Activated CD4-positive, alpha-beta T cell treated with anti-CD3 and anti-CD28 coated beads for 36 hours (primary cell): ENCODE measurements at regions of chr17 and their contacts with region 1.

Region 1: DNA sequence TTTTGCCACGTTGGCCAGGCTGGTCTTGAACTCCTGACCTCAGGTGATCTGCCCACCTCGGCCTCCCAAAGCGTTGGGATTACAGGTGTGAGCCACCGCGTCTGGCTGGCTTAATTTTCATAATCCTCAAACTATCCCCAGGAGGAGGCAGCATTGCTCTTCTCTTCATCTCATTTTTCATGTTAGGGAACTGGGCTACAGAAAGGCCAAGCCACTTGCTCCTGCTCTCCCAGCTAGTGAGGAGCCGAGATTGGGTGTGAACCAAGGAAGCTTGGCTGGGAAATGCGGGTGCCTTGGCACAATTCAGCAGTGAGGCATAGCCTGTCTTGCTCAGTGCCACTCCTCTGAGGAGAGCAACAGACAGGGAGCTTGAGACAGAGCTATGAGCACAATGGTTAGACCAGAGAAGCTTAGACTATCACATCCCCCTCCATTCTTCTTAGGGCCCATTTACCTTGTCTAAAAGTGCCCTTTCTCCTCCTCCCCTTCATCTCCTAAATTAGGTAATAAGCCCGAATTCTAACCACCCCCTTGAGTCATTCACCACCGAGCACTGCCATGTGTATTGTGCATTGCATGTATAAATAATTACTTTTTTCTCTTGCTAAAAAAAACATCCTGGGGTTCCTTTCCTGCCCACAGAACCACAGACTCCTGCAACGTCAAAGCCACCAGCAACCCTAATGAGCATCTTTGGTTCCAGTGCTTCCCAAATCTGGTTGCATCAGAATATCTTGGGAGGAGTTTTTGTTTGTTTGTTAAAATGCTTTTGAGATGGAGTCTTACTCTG is 20.0 kb upstream of the KIF19 start:
- DNase-seq: no peak
- ATAC-seq: peak; percentile 49
- H3K4me3 Mint-ChIP-seq: no peak overlapping the region
- H3K27ac Mint-ChIP-seq: no peak overlapping the region
- H3K4me1 Mint-ChIP-seq: peaks cover 7% of the 10 kb centered on the region
- H3K27me3 Mint-ChIP-seq: no peaks in the 10 kb centered on the region

Region 2: DNA sequence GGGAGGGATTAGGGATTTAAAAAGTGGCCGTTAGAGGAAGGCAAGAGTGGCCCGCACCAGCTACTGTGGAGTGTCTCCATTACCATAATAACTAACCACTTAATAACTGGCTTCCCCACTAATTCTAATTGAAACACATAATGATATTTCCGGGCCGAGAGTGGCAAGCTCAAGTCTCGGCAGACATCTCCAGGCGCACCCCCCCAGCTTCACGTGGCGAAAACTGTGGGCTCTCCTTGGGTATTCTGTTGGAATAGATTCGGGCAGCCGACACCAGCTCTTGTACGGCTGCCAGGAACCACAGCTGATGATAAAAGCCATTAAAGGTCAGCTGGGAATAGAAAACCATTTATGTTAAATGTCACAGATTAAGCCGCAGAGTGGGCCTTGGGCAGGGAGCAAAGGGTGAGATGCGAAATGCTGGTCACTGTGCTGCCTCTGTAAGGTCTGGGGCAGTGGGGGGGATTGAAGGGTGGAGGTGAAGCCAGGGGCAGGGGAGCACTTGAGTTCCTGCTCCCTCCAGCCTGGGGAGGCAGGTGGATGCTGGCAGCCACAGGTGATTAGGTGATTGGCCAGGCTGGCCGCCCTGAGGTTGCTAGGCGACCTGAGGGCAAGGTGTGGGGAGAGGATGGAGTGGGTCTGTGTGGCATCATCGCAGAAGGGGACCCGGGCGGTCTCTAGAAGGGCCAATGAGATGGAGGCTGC is 546.2 kb before region 1 on chr17:
- CTCF ChIA-PET with region 1: no interaction called
- POLR2A ChIA-PET with region 1: no interaction called
- intact Hi-C with region 1: no loop called
- DNase-seq: no peak
- ATAC-seq: no peak
- H3K4me3 Mint-ChIP-seq: no peak overlapping the region
- H3K27ac Mint-ChIP-seq: no peak overlapping the region
- H3K4me1 Mint-ChIP-seq: peaks cover 9% of the 10 kb centered on the region
- H3K27me3 Mint-ChIP-seq: no peaks in the 10 kb centered on the region

Region 3: GRCh38 chr17:74088285-74088933 is 217.7 kb before region 1 on chr17:
- CTCF ChIA-PET with region 1: no interaction called
- POLR2A ChIA-PET with region 1: no interaction called
- intact Hi-C with region 1: no loop called
- DNase-seq: no peak
- ATAC-seq: no peak
- H3K4me3 Mint-ChIP-seq: no peak overlapping the region
- H3K27ac Mint-ChIP-seq: no peak overlapping the region
- H3K4me1 Mint-ChIP-seq: no peaks in the 10 kb centered on the region
- H3K27me3 Mint-ChIP-seq: peaks cover 10% of the 10 kb centered on the region

Region 4: DNA sequence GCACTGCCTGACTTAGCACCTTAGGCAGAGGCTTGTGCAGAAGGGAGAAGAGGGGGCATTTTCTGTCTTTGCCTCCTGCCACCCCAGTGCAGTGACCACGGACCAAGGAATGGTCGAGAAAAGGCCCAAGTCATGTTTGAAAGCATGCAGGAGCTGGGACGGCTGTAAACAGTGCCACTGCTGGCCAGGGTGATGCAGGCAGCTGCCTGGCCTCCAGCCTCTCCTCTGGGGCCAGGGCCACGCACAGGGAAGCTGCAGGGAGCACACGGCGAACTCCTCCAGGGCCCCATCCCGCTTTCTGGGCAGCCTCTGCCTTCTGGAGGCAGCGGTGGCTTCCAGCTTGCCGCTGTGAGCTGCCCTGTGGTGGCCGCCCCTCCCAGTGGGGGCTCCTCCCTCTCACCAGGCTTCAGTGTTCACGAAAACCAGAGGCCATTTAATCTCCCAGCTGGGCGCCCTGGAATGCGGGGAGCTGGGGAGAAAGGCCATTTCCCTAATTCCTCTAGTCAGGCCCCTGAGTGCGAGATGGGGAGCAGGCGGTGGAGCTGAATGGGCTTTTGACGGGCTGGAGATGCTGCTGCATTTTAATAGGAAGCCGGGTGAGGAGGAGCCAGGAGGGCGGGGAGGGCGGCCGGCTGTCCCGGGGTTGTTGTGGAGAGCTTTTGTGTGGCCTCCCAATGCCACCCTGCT is 60.8 kb before region 1 on chr17:
- CTCF ChIA-PET with region 1: no interaction called
- POLR2A ChIA-PET with region 1: no interaction called
- intact Hi-C with region 1: no loop called
- DNase-seq: no peak
- ATAC-seq: no peak
- H3K4me3 Mint-ChIP-seq: no peak overlapping the region
- H3K27ac Mint-ChIP-seq: no peak overlapping the region
- H3K4me1 Mint-ChIP-seq: no peaks in the 10 kb centered on the region
- H3K27me3 Mint-ChIP-seq: no peaks in the 10 kb centered on the region

Region 5: DNA sequence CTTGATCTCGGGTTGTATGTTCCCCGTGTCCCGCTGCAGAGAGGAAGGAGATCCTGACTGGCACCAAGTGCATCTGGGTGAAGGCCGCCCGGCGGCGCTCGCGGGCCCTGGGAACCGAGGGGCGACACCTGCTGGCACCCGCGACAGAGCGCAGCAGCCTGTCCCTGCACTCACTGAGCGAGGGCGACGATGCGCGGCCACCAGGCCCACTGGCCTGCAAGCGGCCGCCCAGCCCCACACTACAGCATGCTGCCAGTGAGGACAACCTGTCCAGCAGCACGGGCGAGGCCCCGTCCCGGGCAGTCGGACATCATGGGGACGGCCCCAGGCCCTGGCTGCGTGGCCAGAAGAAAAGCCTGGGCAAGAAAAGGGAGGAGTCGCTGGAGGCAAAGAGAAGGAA is 48.1 kb after region 1 on chr17:
- CTCF ChIA-PET with region 1: interaction called, 17 read pairs
- POLR2A ChIA-PET with region 1: no interaction called
- intact Hi-C with region 1: loop called (anchors 1 kb)
- DNase-seq: peak; percentile 88
- ATAC-seq: peak; percentile 90
- H3K4me3 Mint-ChIP-seq: no peak overlapping the region
- H3K27ac Mint-ChIP-seq: no peak overlapping the region
- H3K4me1 Mint-ChIP-seq: no peaks in the 10 kb centered on the region
- H3K27me3 Mint-ChIP-seq: peaks cover 53% of the 10 kb centered on the region